ENCODE measurements at regions of chr4 and their contacts with region 1.

Region 1: DNA sequence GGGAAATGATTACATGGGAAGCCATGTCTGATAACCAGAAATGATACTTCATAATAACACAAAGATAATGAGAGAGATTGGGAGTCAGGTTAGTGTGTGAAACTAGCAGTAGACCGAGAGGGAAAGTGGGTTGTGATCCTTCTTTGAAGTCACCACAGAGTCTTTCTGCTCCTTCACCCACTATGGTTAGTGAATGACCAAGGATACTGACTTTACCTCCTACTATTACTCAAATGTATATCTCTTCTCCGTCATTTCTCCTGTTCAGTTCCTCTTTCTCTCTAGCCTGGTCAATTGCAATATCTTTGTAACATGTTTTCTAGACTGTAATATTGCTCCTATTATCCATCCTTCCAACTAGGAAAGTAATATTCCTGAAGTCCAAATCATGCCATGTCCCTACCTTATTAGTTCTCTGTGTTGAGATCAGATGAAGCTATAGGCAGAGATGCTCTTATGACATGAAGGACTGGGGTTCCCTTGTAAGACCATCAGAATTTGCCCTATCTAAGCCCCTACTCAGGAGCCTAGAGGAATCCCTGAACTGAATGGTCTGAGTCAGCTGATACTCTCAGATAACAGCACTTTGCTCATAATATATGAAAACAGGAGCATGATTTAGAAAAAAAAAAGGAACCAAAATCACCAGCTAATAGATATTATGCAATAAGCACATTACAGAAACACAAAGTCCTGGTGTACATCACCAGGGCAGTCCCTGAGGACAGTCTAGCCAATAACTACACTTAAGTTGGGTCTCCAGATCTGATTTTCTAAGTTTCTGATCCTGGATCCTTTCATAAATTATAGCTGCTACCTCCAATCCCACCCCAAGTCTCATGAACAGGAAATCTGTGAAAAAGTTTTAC is 81.2 kb downstream of the SHROOM3 start:
- DNase-seq: peak; percentile 50
- CTCF ChIP-seq: no peak

Region 2: DNA sequence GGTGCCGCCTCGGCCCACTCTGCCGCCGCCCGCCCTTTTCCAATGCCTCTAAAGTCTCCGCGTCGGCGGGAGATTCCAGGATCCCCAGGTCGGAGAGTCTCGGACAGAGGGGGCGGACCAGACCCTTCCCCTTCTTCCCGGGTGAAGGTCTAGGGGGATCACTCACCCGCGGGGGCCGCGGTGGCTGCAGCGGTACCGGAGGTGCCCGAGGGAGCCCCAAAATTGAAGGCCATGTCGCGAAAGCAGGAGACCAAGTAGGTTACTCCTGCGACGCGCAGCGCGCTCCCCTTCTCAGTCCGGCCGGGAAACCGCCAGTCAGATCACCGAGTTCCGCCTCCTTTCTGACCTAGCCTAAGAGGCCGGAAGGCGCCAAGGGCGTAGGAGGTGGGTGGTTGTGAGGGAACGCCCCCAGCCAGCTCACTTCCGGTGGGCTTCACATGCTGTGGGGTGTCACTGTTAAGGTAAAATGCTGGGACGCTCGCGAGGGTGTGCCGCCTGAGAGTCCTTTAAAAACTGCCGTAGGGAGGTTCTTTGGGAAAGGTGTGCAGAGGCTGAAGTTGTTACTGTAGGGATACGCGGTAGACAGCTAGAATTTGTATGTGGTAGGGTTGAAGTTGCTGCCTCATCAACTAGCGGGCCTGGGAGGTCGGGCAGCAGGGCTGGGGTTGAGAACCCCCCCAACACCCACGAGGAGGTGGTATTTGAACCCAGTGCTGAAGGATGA is 367.9 kb before region 1 on chr4 and contains the start of gene NUP54:
- CTCF ChIA-PET with region 1: no interaction called
- POLR2A ChIA-PET with region 1: no interaction called
- DNase-seq: peak; percentile 96
- CTCF ChIP-seq: no peak

Region 3: DNA sequence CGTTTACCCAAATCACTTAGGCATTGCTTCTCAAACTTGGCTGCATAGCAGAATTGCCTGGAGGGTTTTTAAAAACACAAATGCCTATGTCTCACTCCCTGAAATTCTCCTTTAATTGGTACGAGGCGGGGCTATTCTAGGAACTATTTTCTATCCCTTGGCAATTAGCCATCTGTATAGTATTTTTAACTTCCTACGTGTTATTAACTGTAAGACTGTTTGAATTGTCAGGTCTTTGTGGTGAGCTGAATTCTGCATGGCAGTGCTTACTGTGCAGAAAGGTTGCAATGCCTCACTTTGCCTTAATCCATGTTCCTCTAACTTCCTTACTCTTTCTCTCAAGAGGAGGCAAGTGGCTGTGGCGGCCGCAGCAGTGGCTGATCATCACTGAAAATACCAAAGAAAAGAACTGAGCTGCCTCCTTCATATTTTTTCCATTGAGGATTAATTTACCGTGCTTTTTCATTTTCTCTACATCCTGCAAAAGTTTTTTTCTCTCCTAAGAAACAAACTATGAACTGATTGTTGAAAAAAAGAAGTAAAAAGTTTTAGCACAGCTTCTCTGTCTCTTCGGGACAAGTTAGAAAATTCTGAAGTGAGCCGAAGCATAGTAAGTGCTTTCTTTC is 81.2 kb before region 1 on chr4 and contains the start of gene SHROOM3:
- CTCF ChIA-PET with region 1: no interaction called
- POLR2A ChIA-PET with region 1: no interaction called
- DNase-seq: no peak
- CTCF ChIP-seq: no peak

Region 4: GRCh38 chr4:76504613-76505465 is 11.4 kb before region 1 on chr4:
- CTCF ChIA-PET with region 1: interaction called, 17 read pairs
- POLR2A ChIA-PET with region 1: no interaction called
- DNase-seq: peak; percentile 50
- CTCF ChIP-seq: peak; percentile 59

Region 5: DNA sequence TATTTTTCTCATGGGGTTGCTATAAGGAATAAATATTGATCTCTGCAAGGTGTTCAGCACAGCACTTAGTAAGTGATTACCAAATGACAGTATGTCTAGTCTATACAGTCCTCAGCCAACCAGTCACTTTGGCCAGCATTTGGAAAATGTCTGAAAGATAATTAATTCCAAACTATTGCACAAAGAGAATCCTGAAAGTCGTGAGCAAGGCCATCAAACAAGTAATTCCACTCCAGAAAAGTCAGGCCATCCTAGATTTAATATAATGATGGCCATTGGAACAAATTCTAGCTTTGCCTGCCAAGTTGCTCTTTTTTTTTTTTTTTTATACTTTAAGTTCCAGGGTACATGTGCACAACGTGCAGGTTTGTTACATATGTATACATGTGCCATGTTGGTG is 15.4 kb after region 1 on chr4:
- CTCF ChIA-PET with region 1: interaction called, 10 read pairs
- POLR2A ChIA-PET with region 1: no interaction called
- DNase-seq: no peak
- CTCF ChIP-seq: no peak

Region 6: GRCh38 chr4:76546282-76547171 is 30.3 kb after region 1 on chr4:
- CTCF ChIA-PET with region 1: no interaction called
- POLR2A ChIA-PET with region 1: no interaction called
- DNase-seq: no peak
- CTCF ChIP-seq: no peak

Region 7: GRCh38 chr4:76943129-76943620 is 427.0 kb after region 1 on chr4:
- CTCF ChIA-PET with region 1: no interaction called
- POLR2A ChIA-PET with region 1: no interaction called
- DNase-seq: no peak
- CTCF ChIP-seq: no peak

Measured in GM10248 (cell line).